Psoas muscle (tissue), 8 donors: ENCODE measurements at regions of chr17 and their contacts with region 1.

Region 1: DNA sequence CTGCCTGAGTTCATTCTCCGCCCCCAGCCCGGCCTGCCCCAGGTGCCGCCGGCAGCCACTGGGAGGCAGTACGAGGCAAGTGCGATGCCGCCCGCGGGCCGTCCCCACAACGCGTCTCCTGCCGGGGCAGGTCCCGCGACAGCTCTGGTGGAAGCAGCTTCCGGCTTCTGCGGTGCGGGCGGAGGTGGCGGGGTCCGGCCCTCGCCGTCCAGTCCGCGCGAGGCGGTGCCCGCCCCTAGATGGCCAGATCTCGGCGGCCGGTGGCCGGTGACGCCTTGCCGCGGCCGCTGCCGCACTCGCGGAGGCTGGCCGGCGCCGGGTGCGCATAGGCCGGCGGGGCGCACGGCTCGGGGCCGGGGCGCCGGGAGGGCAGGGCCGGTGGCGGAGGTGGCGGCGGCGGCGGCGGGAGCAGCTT is 1.8 kb downstream of the GJD3 start:
- DNase-seq: peak; percentile 70 to 83
- ATAC-seq: peak; percentile 38 to 68 (median 57)
- H3K4me3 ChIP-seq: peak overlapping the region; percentile 69
- H3K27ac ChIP-seq: no peak overlapping the region
- H3K4me1 ChIP-seq: peaks cover 8% of the 10 kb centered on the region
- H3K27me3 ChIP-seq: peaks cover 0 to 3% (median 0%) of the 10 kb centered on the region in 3 donors
- CTCF ChIP-seq: peak; percentile 50

Region 2: GRCh38 chr17:40191237-40192208 is 171.2 kb before region 1 on chr17:
- intact Hi-C with region 1: loop called in 1 of 2 experiments (anchors 10 kb)
- DNase-seq: peak; percentile 75 to 83
- ATAC-seq: peak; percentile 64 to 86 (median 74)
- H3K4me3 ChIP-seq: peak overlapping the region; percentile 64
- H3K27ac ChIP-seq: no peak overlapping the region
- H3K4me1 ChIP-seq: peaks cover 4% of the 10 kb centered on the region
- H3K27me3 ChIP-seq: no peaks in the 10 kb centered on the region
- CTCF ChIP-seq: peak; percentile 48

Region 3: DNA sequence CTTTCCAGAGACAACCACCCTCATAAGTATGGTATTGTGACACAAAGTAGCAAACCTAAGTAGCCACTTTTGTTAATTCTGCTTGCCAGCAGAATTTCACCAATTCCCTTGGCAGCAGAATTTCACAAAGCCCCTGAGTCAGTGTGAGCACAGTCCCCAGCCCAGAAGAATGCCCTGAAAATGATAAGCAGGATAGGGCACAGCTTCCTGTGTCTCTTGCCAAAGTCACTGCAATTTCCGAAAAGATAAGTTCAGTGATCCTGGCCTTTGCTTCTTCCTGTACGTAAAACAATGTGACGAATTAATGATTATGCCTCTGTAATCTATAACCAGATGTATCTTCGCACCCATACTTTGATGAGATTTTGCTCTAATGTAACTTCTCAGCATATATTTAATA is 159.6 kb before region 1 on chr17:
- intact Hi-C with region 1: loop called (anchors 5 to 10 kb)
- DNase-seq: no peak
- ATAC-seq: no peak
- H3K4me3 ChIP-seq: no peak overlapping the region
- H3K27ac ChIP-seq: no peak overlapping the region
- H3K4me1 ChIP-seq: no peaks in the 10 kb centered on the region
- H3K27me3 ChIP-seq: no peaks in the 10 kb centered on the region
- CTCF ChIP-seq: no peak

Region 4: DNA sequence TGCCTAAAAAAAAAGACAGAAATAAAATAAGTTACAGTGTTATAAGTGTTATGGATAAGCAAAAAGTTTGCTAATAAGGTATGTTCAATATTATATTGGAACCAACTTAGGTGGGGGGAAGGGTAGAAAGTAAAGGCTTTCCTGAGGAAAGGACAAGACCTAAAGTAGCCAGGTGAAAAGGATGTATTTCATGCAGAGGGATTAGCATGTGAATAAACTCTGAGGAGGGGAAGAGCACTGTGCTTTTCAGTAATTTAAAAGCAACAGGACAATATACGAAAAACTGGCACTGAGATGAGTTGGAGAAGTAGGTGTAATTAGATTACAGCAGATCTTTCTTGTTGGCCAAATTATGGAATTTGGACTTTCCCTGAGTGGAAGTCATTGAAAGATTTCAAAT is 47.4 kb after region 1 on chr17:
- intact Hi-C with region 1: loop called (anchors 2 to 5 kb)
- DNase-seq: no peak
- ATAC-seq: no peak
- H3K4me3 ChIP-seq: no peak overlapping the region
- H3K27ac ChIP-seq: no peak overlapping the region
- H3K4me1 ChIP-seq: no peaks in the 10 kb centered on the region
- H3K27me3 ChIP-seq: no peaks in the 10 kb centered on the region
- CTCF ChIP-seq: no peak

Region 5: DNA sequence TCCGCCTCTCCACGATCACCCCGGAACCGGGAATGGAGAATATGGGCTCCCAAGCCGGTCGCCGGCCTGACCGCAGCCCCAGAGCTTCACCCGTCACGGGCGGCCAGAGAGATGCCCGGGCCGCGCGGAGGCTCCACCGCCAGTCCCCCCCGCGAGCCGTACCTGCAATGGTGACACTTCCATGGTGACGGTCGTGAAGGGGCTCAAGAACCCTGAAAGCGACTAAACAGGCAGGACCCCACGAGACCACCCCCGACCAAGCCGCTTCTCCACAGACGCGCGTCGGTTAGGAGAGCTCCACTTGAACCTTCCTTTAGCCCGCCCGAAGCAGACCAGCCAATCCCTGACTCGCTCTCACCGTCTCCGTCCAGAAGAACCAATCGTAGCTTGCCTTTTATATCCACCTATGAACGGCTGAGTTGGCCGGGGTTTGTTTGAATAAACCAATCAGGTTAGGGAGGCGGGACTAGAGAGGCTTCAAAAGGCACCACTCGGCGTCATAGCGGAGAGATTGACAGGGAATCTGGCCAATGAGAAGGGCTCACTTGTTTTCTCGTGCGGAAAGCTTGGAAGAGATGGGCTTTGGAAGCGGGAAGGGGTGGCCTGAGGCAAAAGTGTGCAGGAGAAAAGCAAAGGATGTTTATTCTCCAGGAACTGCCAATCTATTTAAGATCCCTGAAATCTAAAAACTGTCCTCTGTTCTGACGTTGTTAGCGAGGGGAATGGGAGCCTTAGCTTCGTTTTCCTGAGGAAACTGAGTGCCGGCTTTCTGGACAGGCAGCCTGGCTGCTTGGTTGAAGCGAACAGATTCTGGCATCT is 55.1 kb after region 1 on chr17 and contains the start of gene TOP2A:
- intact Hi-C with region 1: loop called (anchors 2 to 5 kb)
- DNase-seq: peak; percentile 89 to 93
- ATAC-seq: peak; percentile 100
- H3K4me3 ChIP-seq: peak within 1 kb of the TSS; percentile 69
- H3K27ac ChIP-seq: peak within 1 kb of the TSS; percentile 14
- H3K4me1 ChIP-seq: peaks cover 5% of the 10 kb centered on the region
- H3K27me3 ChIP-seq: peaks cover 0 to 6% (median 0%) of the 10 kb centered on the region in 3 donors
- CTCF ChIP-seq: no peak
- total RNA-seq, gene TOP2A: 0.15 to 0.84 (median 0.46) TPM

Region 6: GRCh38 chr17:40531051-40531991 is 168.6 kb after region 1 on chr17:
- intact Hi-C with region 1: loop called (anchors 2 to 5 kb)
- DNase-seq: no peak
- ATAC-seq: no peak
- H3K4me3 ChIP-seq: no peak overlapping the region
- H3K27ac ChIP-seq: no peak overlapping the region
- H3K4me1 ChIP-seq: peaks cover 5% of the 10 kb centered on the region
- H3K27me3 ChIP-seq: no peaks in the 10 kb centered on the region
- CTCF ChIP-seq: no peak

Region 7: DNA sequence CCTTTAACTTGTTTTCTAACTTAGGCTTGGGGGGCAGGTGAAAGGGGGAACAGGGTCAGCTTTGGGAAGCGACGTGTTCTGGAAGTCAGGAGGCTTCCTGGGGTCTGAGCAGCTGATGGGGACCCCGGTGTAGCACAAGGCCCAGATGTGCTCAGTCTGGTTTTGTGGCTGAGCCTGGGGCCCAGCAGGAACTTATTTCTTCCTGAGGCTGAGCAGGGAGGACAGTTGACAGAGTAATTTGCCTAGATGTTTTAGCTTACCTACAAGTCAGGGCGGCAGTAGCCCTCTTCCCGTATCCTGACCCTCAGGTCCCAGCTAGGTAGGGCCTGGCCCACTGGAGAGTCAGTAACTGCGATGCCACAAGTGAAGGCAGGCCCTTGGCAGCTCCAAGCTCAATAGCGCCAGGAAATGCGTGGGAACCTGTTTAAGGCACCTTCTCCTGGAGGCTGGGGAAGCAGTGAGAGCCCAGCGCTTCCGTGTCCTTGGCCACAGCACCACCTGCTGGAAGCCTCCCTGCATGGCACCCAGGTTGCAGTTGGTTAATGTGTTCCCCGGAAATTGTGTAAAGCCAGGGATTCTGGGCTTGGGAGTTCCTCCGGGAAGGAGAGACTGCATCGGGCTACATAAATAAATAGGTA is 197.4 kb after region 1 on chr17:
- intact Hi-C with region 1: loop called (anchors 2 to 5 kb)
- DNase-seq: peak; percentile 88 to 91
- ATAC-seq: peak; percentile 88 to 96 (median 92)
- H3K4me3 ChIP-seq: no peak overlapping the region
- H3K27ac ChIP-seq: peak overlapping the region; percentile 30
- H3K4me1 ChIP-seq: peaks cover 5% of the 10 kb centered on the region
- H3K27me3 ChIP-seq: peaks cover 0 to 15% (median 0%) of the 10 kb centered on the region in 3 donors
- CTCF ChIP-seq: peak; percentile 96

Region 8: GRCh38 chr17:40699371-40699770 is 336.7 kb after region 1 on chr17:
- intact Hi-C with region 1: no loop called
- DNase-seq: no peak
- ATAC-seq: peak in 1 of 4 donors; percentile 31
- H3K4me3 ChIP-seq: no peak overlapping the region
- H3K27ac ChIP-seq: no peak overlapping the region
- H3K4me1 ChIP-seq: peaks cover 10% of the 10 kb centered on the region
- H3K27me3 ChIP-seq: peaks cover 0 to 10% (median 0%) of the 10 kb centered on the region in 3 donors
- CTCF ChIP-seq: no peak